Natural killer cell (primary cell): ENCODE measurements at regions of chr3 and their contacts with region 1.

Region 1: GRCh38 chr3:150408221-150409102 is at the start of gene TSC22D2:
- DNase-seq: peak; percentile 97 to 99
- ATAC-seq: peak; percentile 68 to 86 (median 77)
- H3K4me3 ChIP-seq: peak within 1 kb of the TSS; percentile 98
- H3K4me3 Mint-ChIP-seq: peak within 1 kb of the TSS; percentile 92
- H3K27ac ChIP-seq: peak within 1 kb of the TSS; percentile 99
- H3K27ac Mint-ChIP-seq: peak within 1 kb of the TSS; percentile 90 to 96
- H3K4me1 ChIP-seq: peaks cover 16% of the 10 kb centered on the region
- H3K4me1 Mint-ChIP-seq: peaks cover 48 to 49% of the 10 kb centered on the region in 2 donors
- H3K27me3 ChIP-seq: no peaks in the 10 kb centered on the region
- H3K27me3 Mint-ChIP-seq: no peaks in the 10 kb centered on the region
- CTCF ChIP-seq: no peak
- total RNA-seq, gene TSC22D2: 50.1 to 66.3 (median 63.0) TPM

Region 2: GRCh38 chr3:150384296-150385212 is 23.9 kb before region 1 on chr3:
- intact Hi-C with region 1: loop called (anchors 1 kb)
- DNase-seq: peak; percentile 38 to 81
- ATAC-seq: peak; percentile 92 to 95 (median 93)
- H3K4me3 ChIP-seq: peak overlapping the region; percentile 0
- H3K4me3 Mint-ChIP-seq: peak overlapping the region; percentile 72
- H3K27ac ChIP-seq: peak overlapping the region; percentile 67
- H3K27ac Mint-ChIP-seq: peak overlapping the region; percentile 73 to 76
- H3K4me1 ChIP-seq: peaks cover 22% of the 10 kb centered on the region
- H3K4me1 Mint-ChIP-seq: peaks cover 17 to 18% of the 10 kb centered on the region in 2 donors
- H3K27me3 ChIP-seq: no peaks in the 10 kb centered on the region
- H3K27me3 Mint-ChIP-seq: peaks cover 0 to 2% of the 10 kb centered on the region in 2 donors
- CTCF ChIP-seq: peak; percentile 54

Region 3: DNA sequence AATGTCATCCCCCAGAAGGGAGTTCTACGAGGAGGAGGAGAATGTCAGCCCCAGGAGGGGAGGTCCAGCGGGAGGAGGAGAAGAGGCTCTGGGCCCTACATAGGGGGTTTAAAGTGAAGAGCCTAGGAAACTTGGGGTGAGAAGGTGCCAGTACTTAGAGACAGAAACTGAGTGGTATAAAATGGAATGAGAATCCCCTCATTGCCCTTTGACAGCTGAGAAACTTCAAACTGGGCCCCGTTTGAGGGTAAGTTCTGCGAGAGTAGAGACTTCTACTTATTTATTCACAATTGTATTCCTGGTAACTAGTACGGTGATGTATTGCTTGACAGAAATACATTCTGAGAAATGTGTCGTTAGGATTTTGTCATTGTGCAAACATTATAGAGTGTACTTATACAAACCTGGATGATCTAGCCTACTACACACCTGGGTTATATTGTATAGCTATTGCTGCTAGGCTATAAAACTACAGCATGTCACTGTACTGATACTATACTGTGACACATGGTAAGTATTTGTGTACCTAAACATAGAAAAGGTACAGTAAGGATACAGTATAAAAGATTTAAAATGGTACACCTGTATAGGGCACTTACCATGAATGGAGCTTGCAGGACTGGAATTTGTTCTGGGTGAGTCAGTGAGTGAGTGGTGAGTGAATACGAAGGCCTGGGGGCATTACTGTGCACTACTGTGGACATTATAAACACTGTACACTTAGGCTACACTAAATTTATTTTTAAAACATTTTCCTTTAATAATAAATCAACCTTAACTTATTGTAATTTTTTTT is 61.7 kb after region 1 on chr3:
- intact Hi-C with region 1: no loop called
- DNase-seq: no peak
- ATAC-seq: no peak
- H3K4me3 ChIP-seq: no peak overlapping the region
- H3K4me3 Mint-ChIP-seq: no peak overlapping the region
- H3K27ac ChIP-seq: no peak overlapping the region
- H3K27ac Mint-ChIP-seq: no peak overlapping the region
- H3K4me1 ChIP-seq: no peaks in the 10 kb centered on the region
- H3K4me1 Mint-ChIP-seq: no peaks in the 10 kb centered on the region
- H3K27me3 ChIP-seq: no peaks in the 10 kb centered on the region
- H3K27me3 Mint-ChIP-seq: no peaks in the 10 kb centered on the region
- CTCF ChIP-seq: no peak

Region 4: GRCh38 chr3:150546226-150547044 is 138.0 kb after region 1 on chr3 and contains the starts of genes EIF2A and SERP1:
- intact Hi-C with region 1: loop called (anchors 1 kb)
- DNase-seq: peak; percentile 99 to 100
- ATAC-seq: peak; percentile 87 to 97 (median 88)
- H3K4me3 ChIP-seq: peak within 1 kb of the TSS; percentile 61
- H3K4me3 Mint-ChIP-seq: peak within 1 kb of the TSS; percentile 96
- H3K27ac ChIP-seq: peak within 1 kb of the TSS; percentile 87
- H3K27ac Mint-ChIP-seq: peak within 1 kb of the TSS; percentile 97
- H3K4me1 ChIP-seq: peaks cover 6% of the 10 kb centered on the region
- H3K4me1 Mint-ChIP-seq: peaks cover 61 to 69% of the 10 kb centered on the region in 2 donors
- H3K27me3 ChIP-seq: no peaks in the 10 kb centered on the region
- H3K27me3 Mint-ChIP-seq: no peaks in the 10 kb centered on the region
- CTCF ChIP-seq: no peak
- total RNA-seq, gene EIF2A: 102 to 124 (median 108) TPM
- total RNA-seq, gene SERP1: 91.1 to 106 (median 94.9) TPM

Region 5: GRCh38 chr3:151327571-151328198 is 919.2 kb after region 1 on chr3:
- intact Hi-C with region 1: no loop called
- DNase-seq: peak in 1 of 2 donors; percentile 28
- ATAC-seq: no peak
- H3K4me3 ChIP-seq: no peak overlapping the region
- H3K4me3 Mint-ChIP-seq: peak overlapping the region; percentile 72
- H3K27ac ChIP-seq: no peak overlapping the region
- H3K27ac Mint-ChIP-seq: peak overlapping the region; percentile 84 to 86
- H3K4me1 ChIP-seq: peaks cover 4% of the 10 kb centered on the region
- H3K4me1 Mint-ChIP-seq: peaks cover 16 to 28% of the 10 kb centered on the region in 2 donors
- H3K27me3 ChIP-seq: peaks cover 2% of the 10 kb centered on the region
- H3K27me3 Mint-ChIP-seq: no peaks in the 10 kb centered on the region
- CTCF ChIP-seq: peak; percentile 46